ENCODE measurements at regions of chr4 and their contacts with region 1.

Region 1: DNA sequence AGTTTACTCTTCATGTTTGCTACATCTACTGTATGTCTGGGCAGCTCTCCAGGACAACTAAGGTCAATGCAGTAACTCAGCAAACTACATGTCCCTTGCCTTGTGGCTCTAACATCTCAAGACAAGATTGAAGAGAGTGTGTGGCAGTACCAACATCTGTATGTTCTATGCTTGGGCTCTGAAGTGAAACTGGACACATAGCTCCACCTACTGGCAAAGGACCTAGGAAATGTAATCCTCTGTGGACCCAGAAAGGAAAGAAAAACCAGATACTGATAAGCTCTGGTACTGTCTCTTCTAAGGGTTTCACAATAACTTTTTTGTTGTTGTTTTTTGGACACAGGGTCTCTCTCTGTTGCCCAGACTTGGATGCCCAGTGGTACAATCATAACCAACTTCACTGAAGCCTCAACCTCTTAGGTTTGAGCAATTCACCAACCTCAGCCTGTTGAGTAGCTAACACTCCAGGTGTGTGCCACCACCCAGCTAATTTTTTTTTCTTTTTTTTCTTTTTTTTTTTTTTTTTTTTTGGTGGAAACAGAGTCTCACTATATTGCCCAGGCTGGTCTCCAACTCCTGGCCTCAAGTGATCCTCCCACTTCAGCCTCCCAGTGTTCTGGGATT is 64.1 kb downstream of the QDPR start:
- H3K4me3 Mint-ChIP-seq: no peak overlapping the region
- H3K27ac Mint-ChIP-seq: no peak overlapping the region
- H3K4me1 Mint-ChIP-seq: no peaks in the 10 kb centered on the region
- H3K27me3 Mint-ChIP-seq: no peaks in the 10 kb centered on the region

Region 2: GRCh38 chr4:16916719-16917337 is 531.0 kb before region 1 on chr4:
- intact Hi-C with region 1: loop called (anchors 10 kb)
- H3K4me3 Mint-ChIP-seq: no peak overlapping the region
- H3K27ac Mint-ChIP-seq: no peak overlapping the region
- H3K4me1 Mint-ChIP-seq: no peaks in the 10 kb centered on the region
- H3K27me3 Mint-ChIP-seq: no peaks in the 10 kb centered on the region

Region 3: GRCh38 chr4:17347445-17347844 is 100.3 kb before region 1 on chr4:
- intact Hi-C with region 1: no loop called
- H3K4me3 Mint-ChIP-seq: no peak overlapping the region
- H3K27ac Mint-ChIP-seq: no peak overlapping the region
- H3K4me1 Mint-ChIP-seq: no peaks in the 10 kb centered on the region
- H3K27me3 Mint-ChIP-seq: no peaks in the 10 kb centered on the region